ENCODE measurements at regions of chr3 and their contacts with region 1.

Region 1: DNA sequence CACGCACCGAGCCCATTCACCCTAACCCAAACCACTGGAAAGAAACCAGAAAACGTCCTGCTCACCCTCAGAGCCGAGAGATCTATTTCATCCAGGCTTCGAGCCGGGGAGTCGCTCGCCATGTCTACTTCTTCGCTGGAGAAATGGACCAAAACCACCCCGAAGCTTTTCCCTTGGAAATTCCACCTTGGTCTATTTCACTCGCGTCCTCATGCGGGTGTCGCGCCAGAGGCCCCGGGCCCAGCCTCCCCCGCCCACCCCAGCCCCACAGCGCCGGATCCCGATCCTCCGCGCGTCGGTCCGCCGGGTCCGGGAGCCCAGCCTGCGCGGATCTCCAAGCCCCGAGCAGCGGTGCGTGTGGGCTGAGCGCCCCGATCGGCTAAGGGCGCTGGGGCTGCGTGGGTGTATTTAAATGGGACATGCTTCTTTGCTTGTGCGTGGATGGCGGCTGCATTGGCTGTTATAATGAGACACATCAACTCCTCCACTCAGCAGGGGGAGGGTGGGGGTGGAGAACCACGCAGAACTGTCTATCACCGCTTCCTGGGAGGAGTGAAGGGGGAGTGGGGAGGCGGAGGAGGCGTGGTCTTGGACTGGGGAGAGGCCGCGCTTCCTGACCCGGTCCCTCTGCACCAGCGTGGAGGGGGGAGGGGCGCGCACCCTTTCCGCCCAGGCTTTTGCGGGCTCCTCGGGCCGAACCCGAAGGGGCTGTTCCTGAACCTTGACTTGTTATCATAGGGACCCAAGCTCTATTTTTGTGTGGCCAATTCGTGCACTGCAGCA is at the start of gene TNIK:
- DNase-seq: peak; percentile 90
- H3K4me3 ChIP-seq: peak within 1 kb of the TSS; percentile 82 to 87 (median 86)
- H3K27ac ChIP-seq: peak within 1 kb of the TSS; percentile 60
- H3K4me1 ChIP-seq: peaks cover 10% of the 10 kb centered on the region
- H3K27me3 ChIP-seq: no peaks in the 10 kb centered on the region
- CTCF ChIP-seq: peak; percentile 5 to 8
- total RNA-seq, gene TNIK: 7.5 to 9.7 TPM

Region 2: GRCh38 chr3:171049861-171050444 is 410.2 kb before region 1 on chr3:
- CTCF ChIA-PET with region 1: no interaction called
- dilution Hi-C with region 1: no loop called
- in situ Hi-C with region 1: no loop called
- intact Hi-C with region 1: loop called (anchors 5 kb)
- DNase-seq: peak; percentile 49
- H3K4me3 ChIP-seq: no peak overlapping the region
- H3K27ac ChIP-seq: no peak overlapping the region
- H3K4me1 ChIP-seq: no peaks in the 10 kb centered on the region
- H3K27me3 ChIP-seq: no peaks in the 10 kb centered on the region
- CTCF ChIP-seq: peak; percentile 58 to 81

Region 3: GRCh38 chr3:171201825-171202224 is 258.3 kb before region 1 on chr3:
- CTCF ChIA-PET with region 1: interaction called, 17 read pairs
- dilution Hi-C with region 1: no loop called
- in situ Hi-C with region 1: no loop called
- intact Hi-C with region 1: no loop called
- DNase-seq: no peak
- H3K4me3 ChIP-seq: no peak overlapping the region
- H3K27ac ChIP-seq: no peak overlapping the region
- H3K4me1 ChIP-seq: no peaks in the 10 kb centered on the region
- H3K27me3 ChIP-seq: no peaks in the 10 kb centered on the region
- CTCF ChIP-seq: no peak

Region 4: DNA sequence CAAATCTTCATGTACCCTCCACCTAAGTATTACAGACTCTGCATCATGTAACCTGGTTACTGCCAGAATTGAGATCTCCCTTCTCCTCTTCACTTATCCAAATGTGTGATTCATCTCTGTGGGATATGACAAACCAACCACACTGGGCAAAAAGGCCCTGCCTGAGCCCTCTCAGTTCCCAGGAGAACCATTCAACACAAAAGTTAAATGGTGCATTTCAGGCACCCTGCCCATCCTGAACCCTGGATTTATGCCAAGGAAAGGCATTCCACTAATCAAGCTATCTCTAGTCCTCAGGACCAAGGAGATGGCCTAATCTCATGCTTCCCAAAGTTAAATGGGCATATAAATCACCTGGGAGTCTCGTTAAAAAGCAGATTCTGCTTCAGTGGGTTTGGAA is 108.5 kb before region 1 on chr3:
- CTCF ChIA-PET with region 1: no interaction called
- dilution Hi-C with region 1: no loop called
- in situ Hi-C with region 1: no loop called
- intact Hi-C with region 1: loop called (anchors 2 kb)
- DNase-seq: peak; percentile 98
- H3K4me3 ChIP-seq: no peak overlapping the region
- H3K27ac ChIP-seq: peak overlapping the region; percentile 65
- H3K4me1 ChIP-seq: peaks cover 87% of the 10 kb centered on the region
- H3K27me3 ChIP-seq: no peaks in the 10 kb centered on the region
- CTCF ChIP-seq: no peak

Region 5: GRCh38 chr3:171383206-171384018 is 76.7 kb before region 1 on chr3:
- CTCF ChIA-PET with region 1: no interaction called
- dilution Hi-C with region 1: no loop called
- in situ Hi-C with region 1: no loop called
- intact Hi-C with region 1: no loop called
- DNase-seq: peak; percentile 57
- H3K4me3 ChIP-seq: no peak overlapping the region
- H3K27ac ChIP-seq: no peak overlapping the region
- H3K4me1 ChIP-seq: no peaks in the 10 kb centered on the region
- H3K27me3 ChIP-seq: no peaks in the 10 kb centered on the region
- CTCF ChIP-seq: no peak

Region 6: DNA sequence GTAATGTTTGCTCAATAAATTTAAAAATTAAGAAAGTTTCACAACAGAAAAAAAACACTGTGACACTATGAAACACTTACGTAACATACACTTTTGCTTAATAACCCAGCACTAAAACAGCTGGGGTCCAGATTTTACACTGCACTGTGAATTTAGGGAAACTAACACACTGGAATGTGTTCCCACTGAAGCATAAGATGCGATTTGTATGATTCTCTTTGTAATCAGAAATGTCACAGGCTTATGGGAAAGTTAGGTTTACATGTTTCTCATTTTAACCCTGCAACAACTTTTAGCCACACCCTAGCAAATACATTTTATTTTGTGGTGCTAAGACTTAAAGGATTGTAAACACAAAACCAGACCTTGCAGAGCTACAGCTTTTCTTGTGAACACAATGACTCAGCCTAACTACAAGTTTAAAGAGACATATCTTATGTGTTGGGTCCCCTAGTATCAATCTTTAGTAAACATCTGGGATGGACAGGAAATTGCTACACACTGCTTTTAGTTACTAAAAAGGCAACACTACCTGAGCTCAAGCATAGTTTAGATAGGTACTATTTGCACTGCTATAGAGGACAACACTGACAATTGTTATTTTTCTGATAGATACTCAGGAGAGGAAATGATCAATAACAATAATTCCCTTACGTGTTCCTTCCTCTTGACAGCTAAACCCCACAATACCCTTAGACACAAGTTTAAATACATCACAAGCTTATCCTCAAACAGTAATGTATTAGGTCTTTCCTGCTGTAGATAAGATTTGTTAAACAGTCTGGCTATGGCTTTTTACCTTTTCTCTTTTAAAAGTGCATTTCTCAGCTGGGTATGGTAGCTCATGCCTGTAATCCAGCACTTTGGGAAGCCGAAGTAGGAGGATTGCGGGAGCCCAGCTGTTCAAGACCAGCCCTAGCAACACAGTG is 346.3 kb after region 1 on chr3:
- CTCF ChIA-PET with region 1: no interaction called
- dilution Hi-C with region 1: no loop called
- in situ Hi-C with region 1: no loop called
- intact Hi-C with region 1: no loop called
- DNase-seq: peak; percentile 86
- H3K4me3 ChIP-seq: no peak overlapping the region
- H3K27ac ChIP-seq: peak overlapping the region; percentile 70
- H3K4me1 ChIP-seq: peaks cover 42% of the 10 kb centered on the region
- H3K27me3 ChIP-seq: no peaks in the 10 kb centered on the region
- CTCF ChIP-seq: no peak